ENCODE measurements at regions of chr3 and their contacts with region 1.

Region 1: DNA sequence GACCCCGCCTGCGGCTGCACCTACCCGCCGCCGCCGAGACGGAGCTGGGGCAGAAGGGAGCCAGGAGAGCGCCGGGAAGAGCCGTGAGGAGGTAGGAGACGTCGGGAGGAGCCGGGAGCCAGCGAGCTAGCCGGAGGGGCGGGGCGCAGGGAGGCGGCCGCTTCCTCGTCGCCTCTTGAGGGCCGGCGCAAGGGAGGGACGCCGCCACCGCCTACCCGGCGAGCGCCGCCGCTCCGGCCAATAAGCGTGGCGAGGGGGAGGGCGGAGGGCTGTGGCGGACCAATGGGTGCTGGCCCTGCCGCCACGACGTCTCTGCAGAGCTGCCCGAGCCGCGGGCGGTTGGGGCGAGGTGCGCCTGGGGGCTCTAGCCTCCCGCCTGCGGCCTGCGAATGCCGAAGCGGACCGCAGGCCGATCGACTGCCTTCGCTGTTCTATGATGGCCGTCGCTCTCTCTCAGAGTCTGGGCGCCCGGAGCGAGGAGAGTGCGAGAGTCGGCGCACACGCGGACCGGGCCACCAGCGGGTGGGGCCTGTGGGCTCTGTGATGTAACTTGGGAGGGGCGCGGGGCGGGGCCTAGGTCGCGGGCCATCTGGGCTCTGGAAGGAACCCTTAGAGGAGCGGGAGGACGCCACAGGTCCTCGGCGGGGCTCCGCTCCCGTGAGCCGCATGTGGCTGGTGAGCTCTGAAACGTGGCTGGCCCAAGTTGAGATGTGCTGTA is 72.7 kb upstream of the MAP4 start:
- DNase-seq: peak; percentile 98

Region 2: DNA sequence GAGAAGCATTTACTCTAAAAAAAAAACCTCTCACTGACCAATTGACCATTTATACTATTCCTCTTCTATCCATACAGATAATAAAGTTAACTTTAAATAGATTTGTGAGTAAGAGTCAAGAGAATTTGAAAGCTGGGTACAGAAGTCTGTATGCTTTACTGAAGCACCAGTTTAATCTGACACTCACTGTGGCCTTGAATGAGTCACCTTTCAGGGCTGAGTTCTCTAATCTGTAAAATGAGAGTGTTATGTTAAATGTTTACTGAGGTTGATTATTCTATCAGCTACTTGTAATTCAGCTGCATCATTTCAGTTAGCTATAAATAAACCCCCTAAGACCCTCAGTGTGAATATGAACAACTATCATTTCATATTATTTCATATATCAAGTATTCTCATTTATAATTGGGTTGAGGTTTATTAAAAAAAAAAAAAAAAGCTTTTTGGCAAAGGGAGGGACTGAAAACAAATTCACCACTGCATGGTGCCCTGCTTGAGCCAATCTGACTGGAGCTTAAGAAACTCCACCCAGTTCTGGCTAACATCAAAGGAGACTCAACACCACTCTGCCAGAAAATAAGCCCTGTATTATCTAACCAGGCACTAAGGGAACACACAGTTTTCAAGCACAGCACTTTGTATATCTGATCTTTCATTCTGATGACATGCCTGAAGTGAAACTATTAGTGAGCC is 75.5 kb before region 1 on chr3:
- intact Hi-C with region 1: loop called (anchors 1 kb)
- DNase-seq: no peak

Region 3: DNA sequence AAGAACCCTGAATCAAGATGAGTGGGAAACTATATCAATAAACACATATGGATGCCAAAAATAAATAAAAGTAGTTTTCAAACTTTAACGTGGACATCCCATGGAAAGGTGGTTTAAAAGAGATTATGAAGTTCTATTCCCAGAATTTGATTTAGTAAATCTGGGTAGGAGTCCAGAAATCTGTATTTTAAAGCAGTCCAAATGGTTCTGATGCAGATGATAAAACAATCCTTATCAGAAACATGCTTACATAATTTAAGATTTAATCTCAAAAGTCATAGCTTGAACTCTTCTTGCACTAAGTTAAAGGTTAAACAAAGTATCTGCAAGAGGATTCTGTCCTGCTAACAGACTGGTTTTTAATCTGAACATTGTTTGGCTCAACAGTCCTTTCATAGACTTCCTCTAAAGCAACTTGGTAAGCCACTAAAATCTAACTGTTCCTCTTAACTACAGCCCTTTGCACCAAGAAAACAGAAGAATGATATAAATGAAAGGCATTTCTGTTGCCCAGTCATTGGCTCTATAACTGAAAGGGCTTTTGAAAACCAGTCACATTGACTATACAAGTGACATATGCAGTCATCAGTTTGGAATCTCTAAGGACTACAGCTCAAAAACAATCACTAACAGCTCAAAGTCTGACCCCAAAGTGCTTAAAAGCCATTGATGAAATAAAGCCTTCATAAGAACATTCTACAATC is 49.3 kb before region 1 on chr3:
- intact Hi-C with region 1: loop called (anchors 5 kb)
- DNase-seq: no peak

Region 4: GRCh38 chr3:48130321-48130904 is 41.5 kb after region 1 on chr3:
- intact Hi-C with region 1: loop called (anchors 5 kb)
- DNase-seq: peak; percentile 88

Region 5: DNA sequence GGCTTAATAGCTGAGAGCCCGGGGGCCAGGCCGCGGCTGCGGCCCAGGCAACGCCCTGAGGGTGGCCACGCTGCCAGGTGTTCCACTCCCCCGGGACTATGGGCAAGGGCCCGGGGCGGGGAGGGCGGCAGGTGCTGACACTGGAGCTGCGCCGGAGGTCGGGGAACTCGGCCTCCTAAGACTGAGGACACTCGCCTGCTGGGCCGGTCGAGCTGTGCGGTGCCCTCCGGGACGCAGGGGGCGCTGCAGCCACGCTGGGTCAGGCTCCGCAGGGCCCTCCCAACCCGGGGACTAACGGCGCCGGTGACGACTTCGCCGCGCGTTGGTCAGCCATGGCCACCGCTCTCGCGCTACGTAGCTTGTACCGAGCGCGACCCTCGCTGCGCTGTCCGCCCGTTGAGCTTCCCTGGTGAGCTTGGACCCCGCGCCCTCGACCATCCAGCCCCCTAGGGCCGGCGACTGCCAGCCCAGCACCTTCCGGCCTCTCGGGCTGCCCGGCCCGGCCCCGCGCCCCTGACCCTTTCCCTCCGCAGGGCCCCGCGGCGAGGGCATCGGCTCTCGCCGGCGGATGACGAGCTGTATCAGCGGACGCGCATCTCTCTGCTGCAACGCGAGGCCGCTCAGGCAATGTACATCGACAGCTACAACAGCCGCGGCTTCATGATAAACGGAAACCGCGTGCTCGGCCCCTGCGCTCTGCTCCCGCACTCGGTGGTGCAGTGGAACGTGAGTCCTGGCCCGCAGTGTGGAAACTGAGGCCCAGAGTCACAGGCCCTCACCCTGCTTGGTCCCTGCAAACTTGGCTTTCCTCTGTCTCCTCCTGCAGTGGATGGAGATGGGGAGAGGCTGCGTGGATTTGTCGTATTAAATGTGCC is 933.1 kb after region 1 on chr3 and contains the start of gene NDUFAF3:
- intact Hi-C with region 1: no loop called
- DNase-seq: peak; percentile 97
- total RNA-seq, gene NDUFAF3: 140 TPM

Measured in cardiac septum (tissue), 1 donor.